ENCODE measurements at regions of chr12 and their contacts with region 1.

Region 1: DNA sequence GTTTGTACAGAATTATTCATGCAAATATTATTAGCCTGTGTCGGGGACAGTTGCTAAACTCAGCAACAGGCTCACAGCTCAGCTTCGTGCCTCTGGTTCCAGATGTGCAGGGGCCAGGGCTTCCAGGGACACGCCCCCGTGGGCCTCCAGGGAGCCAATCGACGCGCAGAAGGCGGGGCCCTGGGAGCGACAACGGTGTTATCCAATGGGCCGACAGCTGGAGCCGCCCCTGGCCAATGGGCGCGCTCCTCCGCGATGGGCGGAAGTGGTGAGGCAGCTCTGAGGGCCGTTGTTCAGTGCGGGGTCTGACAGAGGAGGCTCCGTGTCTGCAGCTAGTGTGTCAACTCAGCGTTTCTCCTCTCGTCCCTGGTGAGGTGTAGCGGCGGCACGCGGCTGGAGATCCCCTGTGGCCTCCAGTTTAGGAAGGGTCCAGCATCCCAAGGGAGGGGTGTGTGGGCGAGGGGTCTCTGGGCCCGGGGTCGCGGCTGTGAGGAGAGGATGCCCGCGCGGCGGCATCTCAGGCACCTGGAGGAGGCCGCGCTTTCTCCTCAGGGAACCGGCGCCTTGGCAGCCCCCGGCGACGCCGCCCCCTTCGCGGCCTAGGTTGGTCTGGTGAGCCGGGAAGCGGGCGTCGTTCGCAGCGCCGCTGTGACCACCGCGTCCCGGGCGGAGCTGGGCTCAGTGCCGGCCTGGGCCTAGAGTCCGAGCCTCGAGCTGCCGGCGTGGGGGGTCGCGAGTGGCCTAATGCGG is at the start of gene TRAFD1:
- H3K4me3 Mint-ChIP-seq: peak within 1 kb of the TSS; percentile 84
- H3K27ac Mint-ChIP-seq: peak within 1 kb of the TSS; percentile 87
- H3K4me1 Mint-ChIP-seq: peaks cover 30% of the 10 kb centered on the region
- H3K27me3 Mint-ChIP-seq: no peaks in the 10 kb centered on the region

Region 2: DNA sequence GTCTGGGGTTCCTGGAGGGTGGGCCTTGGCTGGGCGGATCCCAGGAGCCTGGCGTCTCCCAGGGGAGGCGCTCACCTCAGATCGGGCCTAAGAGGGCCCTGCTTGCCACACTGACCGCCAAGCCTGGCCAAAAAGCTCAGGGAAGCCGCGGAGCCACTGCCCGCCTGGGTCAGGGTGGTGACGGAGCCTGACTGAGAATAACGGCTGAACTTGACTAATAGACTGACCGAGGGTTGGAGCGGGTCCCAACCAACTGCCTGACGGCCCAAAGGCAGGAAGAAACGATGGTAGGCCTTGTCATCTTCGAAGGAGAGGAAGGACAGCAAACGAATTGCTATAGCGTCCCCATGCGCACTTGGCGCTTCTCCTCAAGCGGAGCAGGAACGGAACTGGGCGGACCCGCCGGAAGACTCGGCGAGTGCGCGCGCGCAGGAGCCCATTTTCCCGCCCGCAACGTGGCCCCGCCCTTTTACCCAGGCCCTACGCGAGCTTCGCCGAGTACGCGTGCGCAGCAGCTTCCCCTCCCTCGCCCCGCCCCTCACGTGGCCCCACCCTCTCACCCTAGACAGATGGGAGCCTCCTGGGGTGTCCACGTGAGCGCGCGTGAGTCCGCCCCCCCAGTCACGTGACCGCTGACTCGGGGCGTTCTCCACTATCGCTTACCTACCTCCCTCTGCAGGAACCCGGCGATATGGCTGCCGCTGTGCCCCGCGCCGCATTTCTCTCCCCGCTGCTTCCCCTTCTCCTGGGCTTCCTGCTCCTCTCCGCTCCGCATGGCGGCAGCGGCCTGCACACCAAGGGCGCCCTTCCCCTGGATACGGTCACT is 112.4 kb before region 1 on chr12 and contains the starts of genes ERP29 and TMEM116:
- intact Hi-C with region 1: loop called (anchors 2 kb)
- H3K4me3 Mint-ChIP-seq: peak within 1 kb of the TSS; percentile 95
- H3K27ac Mint-ChIP-seq: peak within 1 kb of the TSS; percentile 98
- H3K4me1 Mint-ChIP-seq: peaks cover 56% of the 10 kb centered on the region
- H3K27me3 Mint-ChIP-seq: no peaks in the 10 kb centered on the region

Region 3: GRCh38 chr12:112108201-112109079 is 17.0 kb before region 1 on chr12 and contains the start of gene NAA25:
- intact Hi-C with region 1: loop called (anchors 2 kb)
- H3K4me3 Mint-ChIP-seq: peak within 1 kb of the TSS; percentile 90
- H3K27ac Mint-ChIP-seq: peak within 1 kb of the TSS; percentile 99
- H3K4me1 Mint-ChIP-seq: peaks cover 51% of the 10 kb centered on the region
- H3K27me3 Mint-ChIP-seq: no peaks in the 10 kb centered on the region

Region 4: DNA sequence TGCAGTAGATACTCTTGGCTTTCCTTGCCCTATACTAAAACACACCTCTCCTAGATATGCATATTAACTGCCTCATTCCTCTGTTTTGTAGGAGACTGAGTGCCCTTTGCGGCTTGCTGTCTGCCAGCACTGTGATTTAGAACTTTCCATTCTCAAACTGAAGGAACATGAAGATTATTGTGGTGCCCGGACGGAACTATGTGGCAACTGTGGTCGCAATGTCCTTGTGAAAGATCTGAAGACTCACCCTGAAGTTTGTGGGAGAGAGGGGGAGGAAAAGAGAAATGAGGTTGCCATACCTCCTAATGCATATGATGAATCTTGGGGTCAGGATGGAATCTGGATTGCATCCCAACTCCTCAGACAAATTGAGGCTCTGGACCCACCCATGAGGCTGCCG is 15.3 kb after region 1 on chr12:
- intact Hi-C with region 1: no loop called
- H3K4me3 Mint-ChIP-seq: no peak overlapping the region
- H3K27ac Mint-ChIP-seq: no peak overlapping the region
- H3K4me1 Mint-ChIP-seq: peaks cover 10% of the 10 kb centered on the region
- H3K27me3 Mint-ChIP-seq: no peaks in the 10 kb centered on the region